Tibial artery (tissue), 4 donors: ENCODE measurements at regions of chr4 and their contacts with region 1.

Region 1: DNA sequence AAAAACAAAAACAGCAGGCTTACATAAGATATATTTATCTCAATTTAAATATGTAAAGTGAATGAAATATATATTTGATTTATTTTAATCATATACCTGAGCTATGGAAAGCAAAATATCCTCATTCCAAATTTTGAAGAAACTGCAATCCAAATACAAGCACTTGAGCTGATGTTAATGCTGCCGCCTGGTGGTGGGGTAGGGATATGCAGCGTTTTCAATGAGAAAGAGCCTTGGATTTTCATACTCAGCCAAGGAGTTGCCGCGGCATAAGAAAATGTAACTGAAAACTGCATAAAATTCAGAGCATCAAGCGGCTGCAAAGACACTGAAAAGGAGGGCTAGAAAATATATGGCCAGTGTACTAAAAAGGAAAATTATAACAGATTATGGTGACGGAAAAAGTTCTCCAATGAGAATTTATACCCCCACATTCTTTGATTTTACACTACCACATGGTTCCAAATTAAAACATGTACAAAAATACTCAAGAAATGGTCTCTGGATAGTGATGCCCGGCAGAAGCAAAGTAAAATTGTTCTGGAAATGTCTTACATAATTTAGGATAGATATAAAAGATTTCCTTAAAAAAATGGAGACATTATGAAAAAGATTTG is 660.3 kb upstream of the PITX2 start:
- DNase-seq: peak in 1 of 2 donors; percentile 26
- H3K4me3 ChIP-seq: no peak overlapping the region
- H3K27ac ChIP-seq: no peak overlapping the region
- H3K4me1 ChIP-seq: no peaks in the 10 kb centered on the region
- H3K27me3 ChIP-seq: no peaks in the 10 kb centered on the region
- CTCF ChIP-seq: peak; percentile 58 to 73

Region 2: GRCh38 chr4:110458494-110459266 is 824.5 kb before region 1 on chr4:
- intact Hi-C with region 1: loop called (anchors 5 kb)
- DNase-seq: no peak
- H3K4me3 ChIP-seq: no peak overlapping the region
- H3K27ac ChIP-seq: no peak overlapping the region
- H3K4me1 ChIP-seq: no peaks in the 10 kb centered on the region
- H3K27me3 ChIP-seq: no peaks in the 10 kb centered on the region
- CTCF ChIP-seq: no peak

Region 3: DNA sequence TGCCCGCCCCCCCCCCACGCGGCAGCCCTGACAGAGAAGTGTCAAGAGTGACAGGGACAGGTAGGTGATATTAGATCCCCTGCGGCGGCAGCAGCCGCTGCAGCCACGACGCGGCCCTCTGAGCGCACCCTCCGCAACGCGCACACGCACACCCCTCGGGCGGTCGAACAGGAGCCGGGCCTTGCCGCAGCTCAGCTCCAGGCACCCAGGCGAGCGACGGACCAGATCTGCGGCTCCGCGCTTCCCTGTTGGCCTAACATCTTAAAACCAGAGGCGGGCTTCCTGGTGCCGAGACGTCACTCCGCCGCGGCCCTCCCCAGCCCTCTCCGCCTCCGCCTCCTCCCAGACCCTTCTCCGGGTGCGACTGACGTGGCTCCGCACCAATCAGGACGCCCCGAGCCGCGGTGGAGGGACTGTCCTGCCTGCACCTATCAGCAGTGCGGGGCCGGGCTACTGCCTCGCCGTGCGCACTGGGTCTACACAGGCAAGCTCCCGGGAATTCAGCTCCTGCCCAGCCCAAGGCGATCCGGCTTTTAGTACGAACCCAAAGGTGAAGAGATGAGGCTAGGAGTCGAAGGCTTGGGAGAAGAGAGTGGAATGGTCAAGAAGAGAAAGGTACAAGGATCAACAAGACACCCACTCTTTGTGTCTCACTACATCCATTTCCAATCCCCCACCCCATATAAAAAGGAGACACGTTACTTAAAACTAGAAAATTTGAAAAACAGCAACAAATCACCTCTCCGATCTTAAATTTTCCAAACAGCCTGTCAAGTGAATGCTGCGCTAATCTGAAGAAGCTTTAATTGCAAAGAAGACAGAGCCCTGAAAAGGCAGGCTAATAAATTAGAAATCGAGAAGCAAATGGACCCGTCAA is 660.1 kb before region 1 on chr4 and contains the start of gene PITX2:
- intact Hi-C with region 1: loop called (anchors 10 kb)
- DNase-seq: no peak
- H3K4me3 ChIP-seq: peak within 1 kb of the TSS; percentile 42 to 47
- H3K27ac ChIP-seq: no peak within 1 kb of the TSS
- H3K4me1 ChIP-seq: peaks cover 4 to 31% (median 26%) of the 10 kb centered on the region in 4 donors
- H3K27me3 ChIP-seq: peaks cover 5 to 100% of the 10 kb centered on the region in 2 donors
- CTCF ChIP-seq: no peak

Region 4: GRCh38 chr4:110915301-110915700 is 367.9 kb before region 1 on chr4:
- intact Hi-C with region 1: no loop called
- DNase-seq: no peak
- H3K4me3 ChIP-seq: no peak overlapping the region
- H3K27ac ChIP-seq: no peak overlapping the region
- H3K4me1 ChIP-seq: no peaks in the 10 kb centered on the region
- H3K27me3 ChIP-seq: no peaks in the 10 kb centered on the region
- CTCF ChIP-seq: no peak

Region 5: DNA sequence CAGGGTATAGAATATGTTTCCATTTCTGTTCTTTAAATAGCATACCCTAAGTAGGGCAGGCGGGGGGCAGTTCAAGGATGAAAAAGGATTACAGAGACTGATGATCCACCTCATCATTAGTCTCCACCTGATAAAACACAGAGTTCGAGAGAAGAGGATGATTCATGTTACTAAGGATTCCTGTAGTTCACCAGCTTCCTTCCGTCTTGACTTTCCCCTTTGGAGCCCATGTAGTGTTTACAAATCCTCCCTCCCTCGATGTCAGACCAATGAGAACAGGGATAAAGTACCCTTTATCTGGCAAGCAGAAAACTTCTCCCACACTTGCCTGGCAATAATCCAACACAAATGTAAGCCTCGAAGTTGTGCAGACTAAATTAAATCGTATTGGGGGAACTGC is 335.7 kb after region 1 on chr4:
- intact Hi-C with region 1: no loop called
- DNase-seq: no peak
- H3K4me3 ChIP-seq: no peak overlapping the region
- H3K27ac ChIP-seq: no peak overlapping the region
- H3K4me1 ChIP-seq: no peaks in the 10 kb centered on the region
- H3K27me3 ChIP-seq: no peaks in the 10 kb centered on the region
- CTCF ChIP-seq: no peak

Region 6: GRCh38 chr4:112099701-112100297 is 816.6 kb after region 1 on chr4:
- intact Hi-C with region 1: no loop called
- DNase-seq: no peak
- H3K4me3 ChIP-seq: no peak overlapping the region
- H3K27ac ChIP-seq: no peak overlapping the region
- H3K4me1 ChIP-seq: no peaks in the 10 kb centered on the region
- H3K27me3 ChIP-seq: no peaks in the 10 kb centered on the region
- CTCF ChIP-seq: peak; percentile 57 to 70